ENCODE measurements at regions of chr6 and their contacts with region 1.

Region 1: DNA sequence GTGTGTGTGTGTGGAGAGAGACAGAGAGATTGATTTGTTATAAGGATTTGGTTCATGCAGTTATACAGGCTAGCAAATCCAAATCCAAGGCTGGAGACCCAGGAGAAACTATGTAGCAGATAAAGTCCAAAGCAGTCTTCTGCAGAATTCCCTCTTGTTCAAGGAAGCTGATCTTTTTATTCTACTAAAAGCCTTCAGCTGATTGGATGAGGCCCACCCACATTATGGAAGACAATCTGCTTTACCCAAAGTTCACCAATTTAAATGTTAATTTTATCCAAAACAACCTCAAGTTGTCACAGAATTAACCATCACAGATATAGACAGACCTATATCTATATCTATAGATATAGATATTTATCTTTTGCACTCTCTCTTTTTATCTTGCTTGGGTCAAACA is 67.0 kb downstream of the TPBG start:
- DNase-seq: no peak
- H3K4me3 ChIP-seq: no peak overlapping the region
- H3K27me3 ChIP-seq: no peaks in the 10 kb centered on the region
- CTCF ChIP-seq: no peak

Region 2: GRCh38 chr6:82205930-82206392 is 224.7 kb before region 1 on chr6:
- CTCF ChIA-PET with region 1: no interaction called
- POLR2A ChIA-PET with region 1: no interaction called
- DNase-seq: no peak
- H3K4me3 ChIP-seq: no peak overlapping the region
- H3K27me3 ChIP-seq: no peaks in the 10 kb centered on the region
- CTCF ChIP-seq: no peak

Region 3: DNA sequence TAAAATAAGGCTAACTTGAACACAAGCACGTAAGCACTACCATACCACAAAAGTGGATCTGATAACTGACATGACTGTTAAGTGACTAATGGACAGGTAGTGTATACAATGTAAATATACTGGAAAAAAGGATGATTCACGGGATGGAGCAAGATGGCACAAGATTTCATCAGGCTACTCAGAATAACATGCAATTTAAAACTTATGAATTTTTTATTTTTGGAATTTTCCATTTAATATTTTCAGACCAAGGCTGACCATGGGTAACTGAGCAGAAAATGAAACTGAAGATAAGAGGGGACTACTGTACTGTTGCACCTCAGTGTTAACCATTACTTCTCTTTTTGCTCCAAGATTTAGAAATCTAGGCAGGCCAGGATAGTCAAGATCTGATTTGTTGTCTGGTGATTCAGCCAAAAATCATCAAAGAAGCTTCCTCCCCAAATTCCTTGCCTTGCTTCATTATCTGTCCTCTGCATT is 21.6 kb before region 1 on chr6:
- CTCF ChIA-PET with region 1: interaction called, 4 read pairs
- POLR2A ChIA-PET with region 1: interaction called, 10 read pairs
- DNase-seq: no peak
- H3K4me3 ChIP-seq: no peak overlapping the region
- H3K27me3 ChIP-seq: no peaks in the 10 kb centered on the region
- CTCF ChIP-seq: no peak